Mucosa of descending colon (tissue), 3 donors: ENCODE measurements at regions of chr14 and their contacts with region 1.

Region 1: GRCh38 chr14:99982537-99983250 is 82.5 kb upstream of the EVL start:
- DNase-seq: peak in 2 of 3 donors; percentile 19 to 40
- ATAC-seq: peak; percentile 94
- H3K4me3 ChIP-seq: no peak overlapping the region
- H3K4me1 ChIP-seq: peaks cover 18% of the 10 kb centered on the region
- CTCF ChIP-seq: peak; percentile 76

Region 2: DNA sequence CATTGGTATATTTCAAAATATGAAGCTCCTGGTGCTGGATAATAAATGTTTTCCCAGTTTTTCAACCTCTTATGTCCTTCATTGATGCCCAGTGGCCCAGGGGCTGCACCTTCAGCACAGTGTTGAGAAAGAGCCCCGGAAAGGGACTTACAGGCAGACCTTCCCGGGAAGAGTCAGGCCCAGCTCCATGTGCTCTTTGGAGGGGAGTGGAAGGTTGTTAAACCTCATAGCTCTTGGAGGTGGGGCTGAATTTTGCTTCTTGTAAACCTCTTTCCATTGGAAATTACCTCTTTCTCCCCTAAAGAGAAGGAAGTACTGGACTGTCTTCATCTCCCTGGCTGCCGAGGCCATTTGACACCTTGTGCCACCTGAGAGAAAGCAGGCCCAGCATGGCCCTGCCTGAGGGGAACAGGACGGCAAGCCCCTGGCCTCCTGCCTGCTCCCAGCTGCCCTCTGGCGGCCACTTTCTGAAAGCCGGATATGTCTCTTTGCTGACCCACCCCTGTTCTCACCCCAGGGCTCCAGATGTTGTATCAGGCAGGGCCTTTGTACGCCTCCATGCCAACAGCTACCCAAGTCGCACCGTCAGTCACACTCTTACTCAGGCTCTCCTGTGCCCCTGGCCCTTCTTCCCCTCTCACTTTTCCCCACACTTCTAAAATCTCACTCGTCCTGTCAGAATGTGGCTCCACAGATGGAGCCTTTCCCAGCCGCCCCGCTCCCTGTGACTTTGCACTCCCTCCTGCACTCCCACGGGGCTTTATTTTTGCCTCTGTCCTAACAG is 125.5 kb after region 1 on chr14:
- intact Hi-C with region 1: loop called (anchors 5 kb)
- DNase-seq: peak; percentile 80 to 90 (median 88)
- ATAC-seq: peak; percentile 86
- H3K4me3 ChIP-seq: no peak overlapping the region
- H3K4me1 ChIP-seq: peaks cover 10% of the 10 kb centered on the region
- CTCF ChIP-seq: peak; percentile 64

Region 3: GRCh38 chr14:100187247-100187833 is 204.6 kb after region 1 on chr14:
- intact Hi-C with region 1: loop called (anchors 5 to 10 kb)
- DNase-seq: peak; percentile 53 to 79 (median 64)
- ATAC-seq: peak; percentile 92
- H3K4me3 ChIP-seq: no peak overlapping the region
- H3K4me1 ChIP-seq: peaks cover 12% of the 10 kb centered on the region
- CTCF ChIP-seq: no peak

Region 4: DNA sequence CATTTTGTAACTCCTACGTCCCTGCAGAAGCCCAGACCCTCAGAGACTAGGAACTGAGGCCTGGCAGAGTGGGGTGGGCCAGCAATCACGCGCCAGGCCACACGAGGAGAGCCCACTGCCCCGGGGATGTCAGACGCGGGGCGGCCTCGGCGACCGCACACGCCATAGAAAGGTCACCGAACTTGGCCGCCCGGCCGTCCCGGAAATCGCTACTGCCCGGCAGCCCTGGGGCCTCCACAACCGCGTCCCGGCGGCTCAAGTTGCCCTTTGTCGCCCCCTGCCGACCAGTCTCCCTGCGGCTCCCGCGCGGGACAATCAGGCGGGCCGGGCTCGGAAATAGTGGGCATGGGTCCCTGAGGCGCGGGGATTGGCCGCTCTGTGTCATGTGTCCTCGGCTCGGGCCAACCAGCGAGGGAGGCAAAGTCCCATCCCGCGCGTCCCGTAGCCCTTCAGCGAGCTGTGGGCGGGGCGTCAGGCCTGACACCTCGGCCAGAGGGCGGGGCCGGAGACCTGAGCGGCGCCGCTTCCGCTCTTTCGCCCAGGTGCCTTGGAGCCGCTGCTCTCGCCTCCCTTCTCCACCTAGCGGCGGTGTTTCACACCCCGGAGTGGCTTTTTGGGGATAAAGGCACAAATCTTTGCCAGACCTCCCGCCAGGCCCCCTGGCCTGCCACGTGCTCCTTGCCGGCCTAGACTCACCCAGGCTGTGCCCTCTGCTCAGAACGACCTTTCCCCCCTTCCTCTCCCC is 210.2 kb after region 1 on chr14:
- intact Hi-C with region 1: loop called (anchors 5 to 10 kb)
- DNase-seq: peak; percentile 100
- ATAC-seq: peak; percentile 99
- H3K4me3 ChIP-seq: no peak overlapping the region
- H3K4me1 ChIP-seq: peaks cover 19% of the 10 kb centered on the region
- CTCF ChIP-seq: peak; percentile 95